ENCODE measurements at regions of chr20 and their contacts with region 1.

Region 1: DNA sequence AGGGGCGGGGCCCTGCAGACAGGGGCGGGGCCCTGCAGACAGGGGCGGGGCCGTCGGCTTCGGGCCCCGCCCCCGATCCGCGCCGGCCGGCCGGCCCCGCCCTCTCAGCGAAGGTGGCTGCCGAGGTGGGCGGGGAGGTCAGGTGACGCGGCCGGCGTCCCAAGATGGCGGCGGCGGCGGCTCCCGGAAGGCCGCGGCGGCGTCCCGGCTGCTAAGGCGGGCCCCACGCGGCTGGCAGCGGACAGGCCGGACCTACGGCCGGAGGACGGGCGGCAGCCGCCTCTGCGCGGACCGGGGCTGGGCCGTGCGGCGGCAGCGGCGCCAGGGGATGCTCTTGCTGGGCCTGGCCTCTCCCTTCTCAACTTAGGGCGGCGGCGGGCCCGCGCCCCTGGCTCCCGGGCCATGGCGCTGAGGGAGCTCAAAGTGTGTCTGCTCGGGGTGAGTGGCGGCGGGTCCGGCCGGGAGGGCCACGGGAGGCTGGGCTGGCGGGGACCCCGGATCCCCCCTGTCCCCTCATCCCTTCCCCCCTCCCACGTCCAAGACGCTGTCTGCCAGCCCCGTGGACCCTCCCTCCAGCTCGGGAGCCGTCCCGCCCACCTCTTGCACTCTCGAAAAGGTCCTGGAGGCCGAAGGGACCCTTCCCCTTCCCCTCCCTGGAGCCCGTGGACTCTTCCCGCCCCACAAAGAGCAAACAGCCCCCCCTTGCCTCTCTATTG is at the start of gene RAB22A:
- DNase-seq: peak; percentile 62 to 95 (median 80)
- ATAC-seq: peak; percentile 34
- H3K4me3 ChIP-seq: peak within 1 kb of the TSS; percentile 77
- H3K4me3 Mint-ChIP-seq: peak within 1 kb of the TSS; percentile 97
- H3K27ac ChIP-seq: peak within 1 kb of the TSS; percentile 88 to 89
- H3K27ac Mint-ChIP-seq: peak within 1 kb of the TSS; percentile 98
- H3K4me1 ChIP-seq: peaks cover 58% of the 10 kb centered on the region
- H3K4me1 Mint-ChIP-seq: peaks cover 64% of the 10 kb centered on the region
- H3K27me3 ChIP-seq: no peaks in the 10 kb centered on the region
- H3K27me3 Mint-ChIP-seq: no peaks in the 10 kb centered on the region
- CTCF ChIP-seq: no peak
- total RNA-seq, gene RAB22A: 16.5 to 17.2 TPM

Region 2: GRCh38 chr20:56358596-56359211 is 1951.0 kb before region 1 on chr20 and contains the start of gene FAM210B:
- CTCF ChIA-PET with region 1: no interaction called
- POLR2A ChIA-PET with region 1: no interaction called
- intact Hi-C with region 1: loop called in 1 of 2 experiments (anchors 5 kb)
- DNase-seq: peak; percentile 62 to 93 (median 81)
- ATAC-seq: peak; percentile 99
- H3K4me3 ChIP-seq: peak within 1 kb of the TSS; percentile 86
- H3K4me3 Mint-ChIP-seq: peak within 1 kb of the TSS; percentile 94
- H3K27ac ChIP-seq: no peak within 1 kb of the TSS
- H3K27ac Mint-ChIP-seq: peak within 1 kb of the TSS; percentile 76
- H3K4me1 ChIP-seq: peaks cover 21% of the 10 kb centered on the region
- H3K4me1 Mint-ChIP-seq: peaks cover 29% of the 10 kb centered on the region
- H3K27me3 ChIP-seq: no peaks in the 10 kb centered on the region
- H3K27me3 Mint-ChIP-seq: no peaks in the 10 kb centered on the region
- CTCF ChIP-seq: no peak
- total RNA-seq, gene FAM210B: 14.4 to 14.7 TPM

Region 3: DNA sequence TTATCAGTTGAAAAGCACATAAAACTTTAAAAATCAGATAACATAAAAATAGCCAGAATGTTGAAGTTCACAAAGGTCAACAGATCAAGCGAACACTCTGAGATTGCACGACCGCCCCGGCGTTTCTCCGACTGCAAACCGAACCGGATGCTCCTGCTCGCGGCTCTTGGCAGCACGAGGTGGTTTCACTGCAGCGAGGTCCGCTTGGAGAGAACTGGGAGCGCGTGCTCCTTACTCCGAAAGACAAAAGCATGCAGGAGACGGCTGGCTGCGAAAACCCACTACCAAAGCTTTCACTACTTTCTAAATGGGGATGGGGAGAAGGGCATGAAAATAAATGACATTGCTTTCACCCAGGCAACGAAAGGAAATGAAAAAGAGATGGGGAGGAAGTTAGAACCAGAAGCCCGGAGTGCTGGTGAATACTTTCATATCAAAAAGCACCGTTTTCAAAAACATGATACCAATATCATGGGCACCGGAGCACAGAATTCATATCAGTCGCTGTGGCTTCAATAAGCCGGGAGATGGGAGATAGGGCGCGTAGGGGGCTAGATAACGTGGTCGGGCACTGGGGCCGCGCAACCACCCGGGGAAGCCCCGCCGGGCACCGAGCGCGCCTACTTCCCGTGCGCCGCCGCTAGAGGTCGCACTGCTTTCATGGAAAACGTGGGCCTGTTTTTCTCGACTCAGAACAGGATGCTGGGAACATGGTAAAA is 73.0 kb before region 1 on chr20:
- CTCF ChIA-PET with region 1: interaction called, 17 read pairs
- POLR2A ChIA-PET with region 1: interaction called, 4 read pairs
- intact Hi-C with region 1: loop called (anchors 1 to 2 kb)
- DNase-seq: peak; percentile 66 to 90 (median 82)
- ATAC-seq: peak; percentile 87
- H3K4me3 ChIP-seq: peak overlapping the region; percentile 71
- H3K4me3 Mint-ChIP-seq: peak overlapping the region; percentile 88
- H3K27ac ChIP-seq: peak overlapping the region; percentile 58 to 66
- H3K27ac Mint-ChIP-seq: peak overlapping the region; percentile 77
- H3K4me1 ChIP-seq: peaks cover 9% of the 10 kb centered on the region
- H3K4me1 Mint-ChIP-seq: peaks cover 13% of the 10 kb centered on the region
- H3K27me3 ChIP-seq: no peaks in the 10 kb centered on the region
- H3K27me3 Mint-ChIP-seq: no peaks in the 10 kb centered on the region
- CTCF ChIP-seq: peak; percentile 99

Region 4: DNA sequence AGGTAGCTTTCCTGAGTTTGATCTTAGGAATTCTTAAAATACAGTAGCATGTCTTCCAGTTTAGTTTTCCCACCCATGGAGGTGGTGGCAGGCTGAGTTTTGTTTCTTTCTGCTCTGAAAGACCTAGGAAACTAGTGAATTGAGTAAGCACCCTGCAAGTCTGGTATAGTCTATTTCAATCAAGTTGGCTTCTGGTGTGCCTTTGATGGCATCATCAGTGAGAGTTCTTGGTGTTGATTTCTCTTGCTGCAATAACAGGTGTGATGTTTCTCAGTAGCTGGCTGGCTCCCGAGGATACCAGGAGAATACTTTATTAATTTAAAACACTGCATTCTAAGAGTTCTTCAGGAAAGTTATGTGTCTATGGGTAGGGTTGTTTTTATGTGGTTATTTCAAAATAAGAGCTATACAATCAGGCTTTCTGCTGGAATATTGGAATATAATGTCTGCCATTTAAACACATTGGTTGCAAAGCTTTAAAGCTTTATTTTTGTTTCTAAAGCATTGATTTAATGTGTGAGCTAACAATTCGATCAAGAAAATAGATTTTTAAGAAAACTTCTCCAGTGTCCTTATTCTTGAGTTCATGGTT is 98.3 kb after region 1 on chr20:
- CTCF ChIA-PET with region 1: no interaction called
- POLR2A ChIA-PET with region 1: interaction called, 3 read pairs
- intact Hi-C with region 1: loop called in 1 of 2 experiments (anchors 5 kb)
- DNase-seq: peak in 5 of 14 experiments; percentile 22 to 46 (median 40)
- ATAC-seq: peak; percentile 77
- H3K4me3 ChIP-seq: no peak overlapping the region
- H3K4me3 Mint-ChIP-seq: peak overlapping the region; percentile 79
- H3K27ac ChIP-seq: peak overlapping the region; percentile 32 to 65
- H3K27ac Mint-ChIP-seq: peak overlapping the region; percentile 88
- H3K4me1 ChIP-seq: peaks cover 18% of the 10 kb centered on the region
- H3K4me1 Mint-ChIP-seq: peaks cover 38% of the 10 kb centered on the region
- H3K27me3 ChIP-seq: no peaks in the 10 kb centered on the region
- H3K27me3 Mint-ChIP-seq: no peaks in the 10 kb centered on the region
- CTCF ChIP-seq: no peak

Region 5: DNA sequence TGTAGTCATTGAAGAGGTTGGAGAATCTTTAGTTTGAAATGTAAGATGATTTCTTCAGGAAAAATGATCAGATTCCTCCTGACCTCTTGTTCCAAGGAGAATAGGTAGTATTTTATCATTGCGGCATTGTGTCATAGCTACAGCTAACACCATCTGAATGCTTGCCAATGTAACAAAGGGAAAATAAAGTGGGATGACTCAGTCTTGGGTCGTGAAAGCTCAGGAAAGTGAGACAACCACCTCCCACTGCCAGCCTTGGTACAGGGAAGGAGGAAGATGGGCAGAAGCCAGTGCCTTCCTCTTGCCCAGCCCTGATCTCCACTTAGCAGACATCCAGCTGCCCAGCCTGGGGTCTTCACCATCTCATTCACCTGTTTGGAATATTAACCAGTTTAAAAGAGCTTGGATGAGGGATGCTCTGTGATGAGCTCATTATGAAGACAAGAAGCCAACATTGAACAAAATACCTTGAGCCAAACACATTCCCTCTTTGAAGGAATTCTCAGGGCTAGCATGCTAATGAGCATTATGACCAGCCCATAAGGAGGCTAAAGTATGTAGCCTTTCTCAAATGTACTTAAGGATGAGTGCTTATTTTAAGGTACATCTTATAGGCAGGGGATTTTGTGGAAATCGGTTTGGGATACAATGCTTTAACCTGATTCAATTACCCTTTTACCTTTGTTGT is 245.5 kb after region 1 on chr20:
- CTCF ChIA-PET with region 1: no interaction called
- POLR2A ChIA-PET with region 1: no interaction called
- intact Hi-C with region 1: no loop called
- DNase-seq: no peak
- ATAC-seq: no peak
- H3K4me3 ChIP-seq: no peak overlapping the region
- H3K4me3 Mint-ChIP-seq: no peak overlapping the region
- H3K27ac ChIP-seq: no peak overlapping the region
- H3K27ac Mint-ChIP-seq: no peak overlapping the region
- H3K4me1 ChIP-seq: no peaks in the 10 kb centered on the region
- H3K4me1 Mint-ChIP-seq: no peaks in the 10 kb centered on the region
- H3K27me3 ChIP-seq: peaks cover 0 to 10% of the 10 kb centered on the region in 2 experiments
- H3K27me3 Mint-ChIP-seq: peaks cover 46% of the 10 kb centered on the region
- CTCF ChIP-seq: no peak

Region 6: DNA sequence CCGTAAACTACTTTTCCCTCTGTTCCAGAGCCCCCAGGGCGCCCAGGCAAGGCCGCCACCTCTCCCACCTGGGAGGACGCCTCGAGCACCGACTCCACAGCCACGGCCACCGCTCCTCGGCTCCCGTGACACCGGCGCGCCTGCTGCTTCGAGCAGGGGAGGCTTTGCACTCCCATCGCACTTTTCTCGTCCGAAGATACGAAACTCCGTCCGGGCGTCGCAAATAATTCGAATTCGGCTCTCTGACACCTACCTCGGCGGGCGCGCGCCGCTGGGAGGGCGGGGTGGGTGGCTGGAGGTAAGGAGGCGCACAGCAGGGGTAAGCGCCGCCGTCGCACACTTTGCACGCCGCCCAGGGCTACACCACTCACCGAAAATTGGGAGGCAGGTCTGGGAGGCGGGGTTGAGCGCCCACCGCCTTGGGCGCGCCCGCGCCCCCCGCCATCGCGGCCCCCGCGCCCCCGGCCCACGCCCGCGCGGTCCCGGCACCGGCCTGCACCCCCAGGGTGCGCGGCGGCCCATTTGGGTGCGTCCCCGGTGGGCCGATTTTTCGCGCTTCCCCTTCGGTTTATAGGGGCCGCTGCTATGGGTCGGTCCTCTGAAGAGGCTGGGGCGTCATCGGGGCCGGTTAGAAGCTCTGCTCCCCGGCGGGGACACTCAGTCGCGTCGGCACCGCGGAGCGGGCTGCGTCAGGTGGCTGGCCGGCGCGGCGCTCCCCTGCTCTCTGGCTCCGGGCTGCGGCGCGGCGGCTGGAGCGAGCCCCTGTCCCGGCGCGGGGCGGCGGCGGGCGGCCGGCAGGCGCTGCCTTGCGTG is 579.0 kb after region 1 on chr20:
- CTCF ChIA-PET with region 1: no interaction called
- POLR2A ChIA-PET with region 1: interaction called, 5 read pairs
- intact Hi-C with region 1: loop called in 1 of 2 experiments (anchors 10 kb)
- DNase-seq: peak; percentile 69 to 93 (median 82)
- ATAC-seq: peak; percentile 49
- H3K4me3 ChIP-seq: peak overlapping the region; percentile 83
- H3K4me3 Mint-ChIP-seq: peak overlapping the region; percentile 89
- H3K27ac ChIP-seq: peak overlapping the region; percentile 65 to 72
- H3K27ac Mint-ChIP-seq: peak overlapping the region; percentile 95
- H3K4me1 ChIP-seq: peaks cover 11% of the 10 kb centered on the region
- H3K4me1 Mint-ChIP-seq: peaks cover 52% of the 10 kb centered on the region
- H3K27me3 ChIP-seq: no peaks in the 10 kb centered on the region
- H3K27me3 Mint-ChIP-seq: no peaks in the 10 kb centered on the region
- CTCF ChIP-seq: no peak

Region 7: GRCh38 chr20:59149651-59150504 is 840.1 kb after region 1 on chr20:
- CTCF ChIA-PET with region 1: no interaction called
- POLR2A ChIA-PET with region 1: no interaction called
- intact Hi-C with region 1: loop called in 1 of 2 experiments (anchors 5 kb)
- DNase-seq: peak; percentile 52 to 94 (median 72)
- ATAC-seq: peak; percentile 79
- H3K4me3 ChIP-seq: peak overlapping the region; percentile 21
- H3K4me3 Mint-ChIP-seq: peak overlapping the region; percentile 82
- H3K27ac ChIP-seq: peak overlapping the region; percentile 95 to 96
- H3K27ac Mint-ChIP-seq: peak overlapping the region; percentile 97
- H3K4me1 ChIP-seq: peaks cover 99% of the 10 kb centered on the region
- H3K4me1 Mint-ChIP-seq: peaks cover 95% of the 10 kb centered on the region
- H3K27me3 ChIP-seq: no peaks in the 10 kb centered on the region
- H3K27me3 Mint-ChIP-seq: no peaks in the 10 kb centered on the region
- CTCF ChIP-seq: no peak

Measured in CD4-positive, alpha-beta T cell (primary cell).